Caki2 (cell line): ENCODE measurements at regions of chr6 and their contacts with region 1.

Region 1: DNA sequence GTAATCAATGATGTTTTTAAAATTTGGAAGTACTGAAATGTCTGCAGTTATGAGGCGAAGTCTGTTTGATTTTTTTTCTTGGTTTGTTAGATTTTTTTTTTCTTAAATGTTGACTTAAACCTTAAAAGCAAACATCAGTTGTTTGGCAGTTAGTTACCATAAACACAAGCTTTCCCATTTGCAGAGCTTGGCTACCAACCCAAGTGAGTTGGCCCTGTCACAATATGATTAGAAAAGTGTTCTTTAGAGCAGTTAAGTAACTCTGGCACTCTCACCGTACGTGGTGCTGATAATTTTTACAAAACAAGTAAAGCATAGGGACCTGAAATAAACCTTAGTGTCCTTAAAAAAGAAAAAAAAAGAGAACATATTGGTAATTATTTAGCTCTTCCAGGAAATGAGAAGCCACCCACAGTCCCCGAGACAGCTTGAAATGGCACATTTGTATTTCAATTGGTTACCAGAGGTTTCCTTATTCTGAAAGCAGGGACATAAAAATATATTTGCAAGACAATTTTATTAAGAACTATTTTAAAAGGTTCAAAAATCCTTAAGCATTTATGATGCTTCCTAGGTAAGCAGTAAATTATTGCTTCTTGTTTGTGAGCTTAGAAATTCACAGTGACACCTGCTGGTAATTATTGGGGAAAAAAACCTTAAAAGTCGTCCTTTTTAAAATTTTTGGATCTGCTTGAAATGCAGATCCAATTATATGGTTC is 3.9 kb downstream of the HEY2 start:
- DNase-seq: peak; percentile 37

Region 2: GRCh38 chr6:125314019-125314581 is 439.3 kb before region 1 on chr6:
- in situ Hi-C with region 1: loop called (anchors 5 kb)
- DNase-seq: peak; percentile 72

Region 3: GRCh38 chr6:126069449-126069848 is 316.1 kb after region 1 on chr6:
- in situ Hi-C with region 1: no loop called
- DNase-seq: no peak